ENCODE measurements at regions of chr2 and their contacts with region 1.

Region 1: GRCh38 chr2:208134928-208135586 is 5.4 kb upstream of the CRYGC start:
- DNase-seq: no peak
- H3K4me3 ChIP-seq: no peak overlapping the region
- H3K27ac ChIP-seq: no peak overlapping the region
- H3K4me1 ChIP-seq: no peaks in the 10 kb centered on the region
- H3K27me3 ChIP-seq: no peaks in the 10 kb centered on the region
- CTCF ChIP-seq: no peak
- POLR2A ChIP-seq: no peak

Region 2: DNA sequence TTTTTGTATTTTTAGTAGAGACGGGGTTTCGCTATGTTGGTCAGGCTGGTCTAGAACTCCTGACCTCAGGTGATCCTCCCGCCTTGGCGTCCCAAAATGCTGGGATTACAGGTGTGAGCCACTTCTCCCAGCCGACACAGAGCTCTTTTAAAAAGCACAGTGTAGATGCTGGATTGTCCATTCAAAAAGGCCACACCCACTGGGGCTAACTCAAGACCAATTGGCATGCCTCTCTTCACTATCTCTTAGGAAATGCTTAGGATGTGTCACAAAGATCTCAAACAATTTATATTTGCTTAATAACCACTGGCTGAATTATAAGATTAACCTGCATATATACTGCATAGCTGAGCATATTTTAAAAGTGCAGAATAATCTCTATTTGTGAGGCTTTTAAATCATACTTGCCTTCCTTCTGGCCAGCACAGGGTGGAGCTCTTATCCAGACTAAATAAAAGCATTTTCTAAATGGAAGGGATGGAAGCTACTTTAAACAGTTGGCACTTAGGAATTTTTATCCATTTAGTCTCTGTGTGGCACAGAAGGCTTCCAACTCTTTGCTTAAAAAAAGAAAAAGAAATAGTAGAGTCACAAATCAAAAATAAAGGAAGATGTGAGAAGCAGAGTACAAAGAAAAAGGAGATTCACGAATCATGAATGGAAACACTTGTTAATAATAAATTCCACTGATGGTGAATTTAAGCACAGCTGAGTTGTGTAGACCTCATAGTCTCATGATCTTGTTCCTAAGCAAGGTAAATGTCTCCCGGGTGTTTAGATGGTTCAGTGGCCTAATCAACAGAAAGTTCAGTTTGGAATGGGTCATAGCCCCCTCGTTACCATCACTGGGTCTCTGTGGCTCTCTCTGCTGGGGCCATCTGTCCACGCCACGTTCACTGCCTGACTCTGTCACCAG is 33.1 kb before region 1 on chr2:
- intact Hi-C with region 1: no loop called
- DNase-seq: no peak
- H3K4me3 ChIP-seq: no peak overlapping the region
- H3K27ac ChIP-seq: no peak overlapping the region
- H3K4me1 ChIP-seq: no peaks in the 10 kb centered on the region
- H3K27me3 ChIP-seq: no peaks in the 10 kb centered on the region
- CTCF ChIP-seq: no peak
- POLR2A ChIP-seq: no peak

Region 3: GRCh38 chr2:208148803-208149202 is 13.7 kb after region 1 on chr2:
- intact Hi-C with region 1: loop called (anchors 1 kb)
- DNase-seq: no peak
- H3K4me3 ChIP-seq: no peak overlapping the region
- H3K27ac ChIP-seq: no peak overlapping the region
- H3K4me1 ChIP-seq: no peaks in the 10 kb centered on the region
- H3K27me3 ChIP-seq: no peaks in the 10 kb centered on the region
- CTCF ChIP-seq: no peak
- POLR2A ChIP-seq: no peak